Posterior cingulate gyrus (tissue), 11 donors: ENCODE measurements at regions of chr11 and their contacts with region 1.

Region 1: DNA sequence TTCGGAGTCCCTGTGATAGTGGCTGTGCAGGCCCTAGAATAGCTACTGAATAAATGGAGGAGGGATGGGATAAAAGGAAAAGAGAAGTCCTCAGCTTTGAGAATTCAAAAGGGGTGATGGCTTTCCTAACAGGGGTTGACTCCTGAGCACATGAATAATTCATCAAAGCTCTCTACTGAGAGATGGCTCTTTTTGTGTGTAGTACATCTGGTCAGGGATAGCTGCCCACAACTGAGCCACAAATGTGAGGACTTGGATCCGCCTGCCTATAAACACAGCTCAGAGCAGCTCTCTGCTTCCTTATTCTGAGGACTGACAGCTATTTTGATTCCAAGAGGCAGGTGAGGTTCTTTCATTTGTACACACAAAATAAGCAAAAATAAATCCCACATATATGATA is 82.3 kb downstream of the USP35 start:
- DNase-seq: peak in 4 of 10 donors; percentile 21 to 85 (median 34)

Region 2: GRCh38 chr11:78350646-78351165 is 79.7 kb after region 1 on chr11:
- intact Hi-C with region 1: loop called (anchors 5 kb)
- DNase-seq: peak in 2 of 10 donors; percentile 46 to 82

Region 3: DNA sequence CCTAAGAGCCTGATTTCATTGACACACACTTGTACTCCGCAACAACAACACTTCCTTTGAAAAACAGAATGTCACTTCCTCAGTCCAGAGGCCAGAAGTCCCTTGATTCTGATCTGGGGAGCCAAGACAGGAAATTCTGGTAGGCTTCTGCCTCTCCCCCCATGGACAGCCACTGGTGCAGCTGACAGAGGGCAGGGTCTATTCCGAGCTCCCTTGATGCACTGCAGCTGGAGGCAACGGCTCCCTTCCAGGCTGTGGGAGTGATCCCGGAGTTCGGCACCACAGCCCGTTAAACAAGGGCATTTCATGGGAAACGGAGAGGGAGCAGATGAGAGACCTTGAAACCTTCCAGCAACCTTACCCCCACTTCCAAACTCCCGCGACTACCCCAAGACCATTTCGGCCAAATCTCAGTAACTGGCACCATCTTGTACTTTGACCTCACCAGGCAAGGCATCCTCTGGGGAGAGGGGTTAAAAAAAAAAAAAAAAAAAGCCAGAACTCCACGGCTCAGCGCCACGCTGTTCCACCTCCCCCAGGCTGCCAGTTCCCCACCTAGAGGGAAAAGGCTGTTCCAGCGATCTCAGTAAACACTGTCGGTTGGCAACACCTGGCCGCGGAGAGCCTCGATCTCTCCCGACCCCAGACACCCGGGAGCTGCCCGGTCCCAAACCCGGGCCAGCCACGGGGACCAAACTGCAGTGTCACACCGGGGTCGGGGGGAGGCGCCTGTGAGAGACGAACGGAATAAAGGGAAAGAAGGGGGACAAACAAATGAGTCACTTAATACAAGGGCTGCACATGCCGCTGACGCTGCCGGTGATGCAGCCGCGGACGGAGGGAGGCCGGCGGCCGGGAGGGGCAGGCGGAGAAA is 145.6 kb after region 1 on chr11:
- intact Hi-C with region 1: no loop called
- DNase-seq: peak; percentile 69 to 97 (median 85)